Adrenal gland (tissue), 19 donors: ENCODE measurements at regions of chr15 and their contacts with region 1.

Region 1: DNA sequence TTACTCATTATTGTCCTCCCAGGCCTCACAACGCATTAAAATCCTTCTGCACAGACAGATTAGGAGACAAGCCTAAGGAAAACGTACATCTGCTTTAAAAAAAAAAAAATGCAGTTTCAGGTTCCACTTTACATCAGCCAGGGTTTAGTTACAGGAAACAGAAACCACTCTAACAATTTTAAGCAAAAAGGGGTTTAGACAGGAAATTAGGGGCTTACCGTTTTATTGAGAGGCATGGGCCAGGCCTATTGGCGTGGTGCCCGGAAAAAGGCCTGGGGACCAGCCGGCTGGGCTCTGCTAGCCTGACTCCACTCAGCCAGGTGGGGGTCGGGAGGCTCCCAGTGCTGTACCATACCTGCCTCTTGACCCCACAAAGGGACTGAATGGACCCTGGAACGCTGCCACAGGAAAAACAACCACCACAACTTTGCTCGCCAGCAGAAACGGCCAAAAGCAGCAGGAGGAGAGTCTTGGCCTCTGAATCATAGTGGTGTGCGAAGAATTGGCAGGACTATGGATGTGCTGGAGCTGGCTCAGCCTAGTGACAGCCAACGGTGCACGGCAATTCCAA is 124.3 kb downstream of the CHSY1 start:
- DNase-seq: peak; percentile 70 to 90 (median 85)
- H3K4me3 ChIP-seq: no peak overlapping the region
- H3K27ac ChIP-seq: peak overlapping the region in 3 of 5 donors; percentile 54 to 82 (median 71)
- H3K4me1 ChIP-seq: peaks cover 7 to 16% of the 10 kb centered on the region in 2 donors
- H3K27me3 ChIP-seq: no peaks in the 10 kb centered on the region
- CTCF ChIP-seq: no peak
- POLR2A ChIP-seq: no peak

Region 2: DNA sequence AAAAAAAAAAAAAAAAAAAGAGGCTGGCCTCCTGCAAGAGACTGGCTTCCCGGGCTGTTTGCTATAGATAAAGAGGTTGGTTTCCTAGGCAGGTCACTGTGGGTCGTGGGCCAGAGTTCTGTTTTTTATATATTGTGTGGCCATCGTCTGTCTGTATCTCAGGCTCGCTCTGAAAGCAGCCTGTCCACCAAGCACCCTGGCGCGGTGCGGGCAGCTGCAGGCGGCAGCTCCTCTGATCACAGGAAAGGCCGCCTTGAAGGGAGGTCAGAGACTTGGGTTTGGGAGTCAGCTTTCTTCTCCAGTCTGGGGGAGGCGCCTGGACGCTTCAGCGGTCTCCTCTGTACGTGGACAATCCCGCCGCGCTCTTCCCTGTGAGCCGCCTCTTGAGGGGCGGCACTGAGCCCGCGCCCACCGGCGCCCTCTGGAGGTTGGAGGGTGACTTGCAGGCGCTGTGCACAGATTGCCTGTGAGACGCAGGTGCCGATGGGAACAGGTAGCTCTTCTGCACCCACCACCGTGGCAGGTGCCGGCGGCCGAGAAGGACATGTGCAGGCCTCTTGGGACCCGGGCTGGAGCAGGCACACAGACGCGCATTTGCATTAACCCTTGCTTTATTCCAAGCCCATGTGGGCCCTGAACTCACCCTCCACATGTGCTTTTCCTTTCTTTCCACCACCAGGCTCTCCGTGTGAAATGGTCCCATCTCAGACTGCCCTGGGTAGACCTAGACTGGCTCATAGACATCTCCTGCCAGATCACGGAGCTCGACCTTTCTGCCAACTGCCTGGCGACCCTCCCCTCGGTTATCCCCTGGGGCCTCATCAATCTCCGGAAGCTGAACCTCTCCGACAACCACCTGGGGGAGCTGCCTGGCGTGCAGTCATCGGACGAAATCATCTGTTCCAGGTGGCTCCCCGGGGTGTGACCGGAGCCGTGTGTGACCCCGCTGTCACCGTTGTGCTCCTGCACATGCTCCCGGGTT is 119.1 kb before region 1 on chr15:
- intact Hi-C with region 1: no loop called
- DNase-seq: peak; percentile 62 to 89 (median 78)
- H3K4me3 ChIP-seq: peak overlapping the region in 1 of 4 donors; percentile 45
- H3K27ac ChIP-seq: peak overlapping the region in 1 of 5 donors; percentile 60
- H3K4me1 ChIP-seq: peaks cover 0 to 10% of the 10 kb centered on the region in 2 donors
- H3K27me3 ChIP-seq: peaks cover 3% of the 10 kb centered on the region
- CTCF ChIP-seq: peak; percentile 76 to 98 (median 90)
- POLR2A ChIP-seq: no peak

Region 3: GRCh38 chr15:101188637-101189408 is 61.2 kb after region 1 on chr15:
- intact Hi-C with region 1: loop called in 1 of 2 experiments (anchors 10 kb)
- DNase-seq: peak in 1 of 7 donors; percentile 30
- H3K4me3 ChIP-seq: peak overlapping the region in 1 of 4 donors; percentile 28
- H3K27ac ChIP-seq: peak overlapping the region; percentile 9 to 88 (median 60)
- H3K4me1 ChIP-seq: peaks cover 13 to 59% of the 10 kb centered on the region in 2 donors
- H3K27me3 ChIP-seq: no peaks in the 10 kb centered on the region
- CTCF ChIP-seq: no peak
- POLR2A ChIP-seq: no peak